Common myeloid progenitor, CD34-positive (primary cell): ENCODE measurements at regions of chr19 and their contacts with region 1.

Region 1: DNA sequence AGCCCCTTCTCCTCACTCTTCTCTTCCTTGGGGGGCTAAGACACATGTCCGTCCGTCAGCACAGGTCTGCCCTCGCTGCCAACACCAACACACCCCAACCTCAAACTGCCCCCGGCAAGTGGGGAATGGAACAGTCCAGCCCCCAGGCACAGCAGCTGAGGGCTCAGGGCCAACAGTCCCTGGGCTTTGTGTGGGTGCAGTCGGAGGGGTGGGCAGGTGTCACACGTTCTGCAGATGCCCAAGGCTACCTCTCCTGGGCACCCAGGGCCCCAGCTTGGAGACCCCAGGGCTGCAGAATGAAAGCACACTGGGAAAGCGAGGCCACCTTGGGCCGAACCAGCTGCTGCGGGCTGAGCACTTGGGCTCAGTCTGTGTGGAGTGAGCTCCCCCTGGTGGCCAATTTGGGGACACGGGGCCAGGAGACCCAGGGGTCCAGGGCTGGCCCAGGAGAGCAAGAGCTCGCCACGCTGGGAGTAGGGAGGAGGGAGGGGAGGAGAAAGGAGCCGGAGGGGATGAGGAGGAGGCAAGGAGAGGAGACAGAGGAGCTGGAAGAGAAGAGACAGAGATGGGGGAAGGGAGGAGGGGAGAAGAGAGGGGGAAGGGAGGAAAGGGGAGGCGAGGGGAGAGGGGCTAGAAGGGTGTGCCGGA is 14.0 kb upstream of the ATP8B3 start:
- DNase-seq: peak; percentile 65 to 83 (median 76)
- H3K4me3 ChIP-seq: no peak overlapping the region
- H3K27ac ChIP-seq: peak overlapping the region in 1 of 2 experiments; percentile 38
- H3K4me1 ChIP-seq: no peaks in the 10 kb centered on the region
- H3K27me3 ChIP-seq: no peaks in the 10 kb centered on the region

Region 2: DNA sequence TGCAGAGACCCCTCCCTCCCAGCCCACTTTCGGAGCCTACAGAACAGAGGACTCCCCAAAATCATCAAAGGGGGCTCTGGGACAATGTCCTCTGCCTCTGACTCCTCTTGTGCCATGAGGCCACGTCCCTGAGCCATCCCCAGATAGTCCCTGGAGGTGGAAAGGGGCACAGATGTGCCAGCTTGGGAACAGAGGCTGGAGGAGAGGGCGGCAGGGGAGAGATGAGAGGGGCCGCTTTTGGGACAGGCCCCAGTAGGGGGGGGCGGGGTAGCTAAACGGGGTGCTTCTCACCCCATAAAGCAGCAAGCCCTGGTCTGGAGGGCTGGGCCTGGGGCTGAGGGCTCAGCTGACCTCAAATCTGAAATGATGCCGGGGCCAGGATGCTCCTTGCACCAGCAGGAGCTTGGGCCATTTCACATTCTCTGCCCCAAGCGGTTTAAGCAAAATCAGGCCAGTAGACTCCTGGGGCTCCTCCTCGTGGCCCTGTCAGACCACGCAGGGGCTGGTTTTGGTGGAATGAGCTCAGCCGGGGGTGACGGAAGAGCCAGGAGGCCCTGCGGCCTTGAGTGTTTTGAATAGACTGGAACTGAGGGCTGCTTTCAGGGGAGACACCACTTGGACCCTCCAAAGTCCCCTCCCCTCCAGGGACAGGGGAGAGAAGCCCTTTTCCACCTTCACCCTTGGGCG is 45.6 kb before region 1 on chr19:
- CTCF ChIA-PET with region 1: interaction called, 15 read pairs
- POLR2A ChIA-PET with region 1: interaction called, 3 read pairs
- DNase-seq: peak; percentile 64 to 80 (median 71)
- H3K4me3 ChIP-seq: no peak overlapping the region
- H3K27ac ChIP-seq: no peak overlapping the region
- H3K4me1 ChIP-seq: peaks cover 0 to 7% (median 2%) of the 10 kb centered on the region in 4 experiments
- H3K27me3 ChIP-seq: peaks cover 4 to 92% (median 28%) of the 10 kb centered on the region in 5 experiments

Region 3: GRCh38 chr19:1812469-1813196 is 13.4 kb before region 1 on chr19:
- CTCF ChIA-PET with region 1: interaction called, 17 read pairs
- POLR2A ChIA-PET with region 1: no interaction called
- DNase-seq: peak; percentile 94 to 97 (median 97)
- H3K4me3 ChIP-seq: peak overlapping the region; percentile 34 to 89 (median 69)
- H3K27ac ChIP-seq: peak overlapping the region in 1 of 2 experiments; percentile 58
- H3K4me1 ChIP-seq: peaks cover 0 to 25% (median 22%) of the 10 kb centered on the region in 4 experiments
- H3K27me3 ChIP-seq: no peaks in the 10 kb centered on the region

Region 4: DNA sequence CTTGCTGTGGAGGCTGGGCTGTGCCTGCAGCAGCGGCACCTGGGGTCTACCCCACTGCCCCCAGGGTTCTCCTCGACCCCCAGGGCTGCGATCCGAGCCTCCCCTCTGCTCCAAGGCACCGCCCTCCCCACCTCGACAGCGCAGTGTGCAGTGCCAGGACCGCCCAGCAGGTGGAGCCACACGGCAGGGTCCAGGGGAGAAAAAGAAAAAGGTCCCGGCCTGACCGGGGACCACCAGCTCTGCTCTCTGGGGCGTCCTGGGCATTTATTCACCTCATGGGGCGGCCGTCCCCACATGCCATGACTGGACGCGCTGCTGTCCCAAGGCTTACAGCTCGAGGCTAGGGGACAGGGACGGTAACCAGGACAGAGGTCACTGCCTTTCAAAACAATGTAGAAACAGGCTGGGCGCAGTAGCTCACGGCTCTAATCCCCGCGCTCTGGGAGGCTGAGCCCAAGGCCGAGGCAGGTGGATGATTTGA is 11.6 kb after region 1 on chr19:
- CTCF ChIA-PET with region 1: interaction called, 80 read pairs
- POLR2A ChIA-PET with region 1: no interaction called
- DNase-seq: peak; percentile 33 to 63 (median 55)
- H3K4me3 ChIP-seq: no peak overlapping the region
- H3K27ac ChIP-seq: peak overlapping the region in 1 of 2 experiments; percentile 64
- H3K4me1 ChIP-seq: peaks cover 0 to 27% (median 19%) of the 10 kb centered on the region in 4 experiments
- H3K27me3 ChIP-seq: no peaks in the 10 kb centered on the region

Region 5: GRCh38 chr19:1848399-1849131 is 22.5 kb after region 1 on chr19 and contains the start of gene REXO1:
- CTCF ChIA-PET with region 1: interaction called, 80 read pairs
- POLR2A ChIA-PET with region 1: no interaction called
- DNase-seq: peak; percentile 95 to 97 (median 97)
- H3K4me3 ChIP-seq: peak within 1 kb of the TSS; percentile 61 to 100 (median 90)
- H3K27ac ChIP-seq: peak within 1 kb of the TSS; percentile 96 to 99
- H3K4me1 ChIP-seq: peaks cover 5 to 73% (median 62%) of the 10 kb centered on the region in 4 experiments
- H3K27me3 ChIP-seq: no peaks in the 10 kb centered on the region

Region 6: DNA sequence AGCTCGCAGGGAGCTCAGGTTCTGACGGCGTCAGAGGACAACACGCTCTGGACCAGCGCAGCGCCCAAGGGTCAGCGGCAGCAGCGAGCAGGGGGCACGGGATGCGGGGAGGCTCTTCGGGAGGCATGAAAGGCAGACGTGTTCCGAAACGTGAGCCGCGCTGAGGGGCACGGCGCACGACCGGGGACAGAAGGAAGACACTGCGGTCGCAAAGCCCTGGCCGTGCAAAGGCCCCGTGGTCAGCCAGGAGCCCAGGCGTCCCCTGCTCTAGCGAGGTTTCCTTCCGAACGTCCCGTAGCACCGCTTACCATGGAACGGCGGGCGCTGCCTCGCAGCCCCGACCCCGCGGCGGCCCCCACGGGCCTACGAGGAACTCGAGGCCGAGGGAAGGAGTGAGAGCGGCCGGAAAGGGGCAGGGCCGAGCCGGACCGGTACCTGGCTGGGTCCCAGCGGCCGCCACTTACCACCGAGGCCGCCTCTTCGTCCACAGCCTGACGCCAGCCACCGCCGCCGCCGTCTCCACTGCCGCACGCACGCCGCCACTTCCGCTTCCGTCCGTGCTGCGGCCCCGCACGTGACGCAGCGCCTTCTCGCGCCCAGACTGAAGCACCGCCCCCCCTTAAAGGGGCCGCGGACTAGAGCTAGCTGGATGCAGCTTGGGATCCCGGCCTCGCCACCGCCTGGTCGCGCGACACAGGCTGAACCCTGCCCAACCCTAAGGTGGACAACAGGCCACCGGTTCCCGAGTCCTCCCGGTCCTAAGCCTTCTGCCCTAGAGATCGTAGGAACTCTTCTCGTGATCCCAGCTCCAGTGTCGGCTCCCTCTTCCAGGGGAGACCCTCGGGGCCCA is 49.8 kb after region 1 on chr19:
- CTCF ChIA-PET with region 1: no interaction called
- POLR2A ChIA-PET with region 1: no interaction called
- DNase-seq: peak; percentile 89 to 94 (median 93)
- H3K4me3 ChIP-seq: peak overlapping the region; percentile 83 to 99 (median 90)
- H3K27ac ChIP-seq: peak overlapping the region; percentile 86 to 95
- H3K4me1 ChIP-seq: peaks cover 6 to 33% (median 25%) of the 10 kb centered on the region in 4 experiments
- H3K27me3 ChIP-seq: no peaks in the 10 kb centered on the region